Naive thymus-derived CD4-positive, alpha-beta T cell (primary cell): ENCODE measurements at regions of chr10 and their contacts with region 1.

Region 1: GRCh38 chr10:22682237-22683139 is 31.9 kb downstream of the PIP4K2A start:
- DNase-seq: peak in 8 of 9 donors; percentile 43 to 81 (median 75)
- ATAC-seq: peak; percentile 79
- H3K4me3 ChIP-seq: peak overlapping the region; percentile 36
- H3K4me3 Mint-ChIP-seq: peak overlapping the region; percentile 67 to 94 (median 80)
- H3K27ac ChIP-seq: peak overlapping the region; percentile 73
- H3K27ac Mint-ChIP-seq: peak overlapping the region; percentile 90 to 100 (median 95)
- H3K4me1 ChIP-seq: peaks cover 86 to 94% of the 10 kb centered on the region in 2 donors
- H3K4me1 Mint-ChIP-seq: peaks cover 64 to 99% (median 91%) of the 10 kb centered on the region in 7 donors
- H3K27me3 ChIP-seq: no peaks in the 10 kb centered on the region
- H3K27me3 Mint-ChIP-seq: no peaks in the 10 kb centered on the region

Region 2: DNA sequence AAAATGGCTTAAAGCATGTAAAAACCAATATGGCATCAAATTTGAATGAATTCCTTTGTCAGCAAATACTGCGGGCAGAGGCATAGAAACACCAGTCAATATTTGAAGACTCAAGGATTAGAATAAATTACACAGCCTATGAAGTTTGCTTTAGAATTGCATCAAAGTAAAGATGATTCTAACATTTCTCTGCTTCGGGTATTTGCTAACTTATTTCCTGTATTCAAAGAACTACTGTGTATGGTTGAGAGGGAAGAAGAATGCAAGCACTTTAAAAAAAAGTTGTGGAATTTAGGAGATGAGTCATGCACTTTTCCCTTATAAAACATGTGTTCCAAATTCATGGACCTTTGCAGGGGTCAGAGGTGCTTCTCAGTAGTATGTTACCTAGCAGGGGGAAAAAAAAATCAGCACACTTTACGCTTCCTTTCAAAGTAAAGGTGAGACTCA is 58.2 kb before region 1 on chr10:
- CTCF ChIA-PET with region 1: no interaction called
- POLR2A ChIA-PET with region 1: interaction called, 6 read pairs
- intact Hi-C with region 1: loop called in 1 of 2 experiments (anchors 1 kb)
- DNase-seq: peak in 4 of 9 donors; percentile 32 to 46 (median 32)
- ATAC-seq: peak; percentile 76
- H3K4me3 ChIP-seq: peak overlapping the region; percentile 22
- H3K4me3 Mint-ChIP-seq: peak overlapping the region in 9 of 10 donors; percentile 36 to 85 (median 63)
- H3K27ac ChIP-seq: no peak overlapping the region
- H3K27ac Mint-ChIP-seq: peak overlapping the region; percentile 20 to 90 (median 80)
- H3K4me1 ChIP-seq: peaks cover 82 to 100% of the 10 kb centered on the region in 2 donors
- H3K4me1 Mint-ChIP-seq: peaks cover 67 to 100% (median 97%) of the 10 kb centered on the region in 7 donors
- H3K27me3 ChIP-seq: no peaks in the 10 kb centered on the region
- H3K27me3 Mint-ChIP-seq: no peaks in the 10 kb centered on the region

Region 3: DNA sequence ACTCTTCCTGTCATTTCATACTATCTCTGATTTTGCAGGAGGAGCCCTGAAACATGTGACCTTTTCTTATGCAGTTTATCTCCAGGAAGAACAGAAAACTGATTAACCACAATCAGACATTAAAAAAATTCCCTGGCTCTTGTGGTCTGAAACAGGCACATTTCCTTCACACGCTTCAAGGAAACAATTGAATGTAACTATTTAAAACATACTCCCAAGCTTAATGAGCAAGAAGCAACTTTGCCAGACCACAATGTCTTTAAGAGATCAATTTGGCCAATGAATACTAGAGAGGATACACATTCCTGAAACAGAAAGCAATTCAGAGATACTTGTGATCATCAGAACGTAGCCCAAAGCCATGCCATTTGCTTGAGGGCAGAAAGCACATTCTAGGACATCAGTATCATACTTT is 33.9 kb before region 1 on chr10:
- CTCF ChIA-PET with region 1: interaction called, 4 read pairs
- POLR2A ChIA-PET with region 1: interaction called, 8 read pairs
- intact Hi-C with region 1: loop called in 1 of 2 experiments (anchors 1 kb)
- DNase-seq: no peak
- ATAC-seq: no peak
- H3K4me3 ChIP-seq: peak overlapping the region; percentile 37
- H3K4me3 Mint-ChIP-seq: peak overlapping the region in 9 of 10 donors; percentile 60 to 89 (median 82)
- H3K27ac ChIP-seq: peak overlapping the region; percentile 53
- H3K27ac Mint-ChIP-seq: peak overlapping the region; percentile 75 to 97 (median 93)
- H3K4me1 ChIP-seq: peaks cover 97 to 98% of the 10 kb centered on the region in 2 donors
- H3K4me1 Mint-ChIP-seq: peaks cover 79 to 96% (median 90%) of the 10 kb centered on the region in 7 donors
- H3K27me3 ChIP-seq: no peaks in the 10 kb centered on the region
- H3K27me3 Mint-ChIP-seq: no peaks in the 10 kb centered on the region

Region 4: DNA sequence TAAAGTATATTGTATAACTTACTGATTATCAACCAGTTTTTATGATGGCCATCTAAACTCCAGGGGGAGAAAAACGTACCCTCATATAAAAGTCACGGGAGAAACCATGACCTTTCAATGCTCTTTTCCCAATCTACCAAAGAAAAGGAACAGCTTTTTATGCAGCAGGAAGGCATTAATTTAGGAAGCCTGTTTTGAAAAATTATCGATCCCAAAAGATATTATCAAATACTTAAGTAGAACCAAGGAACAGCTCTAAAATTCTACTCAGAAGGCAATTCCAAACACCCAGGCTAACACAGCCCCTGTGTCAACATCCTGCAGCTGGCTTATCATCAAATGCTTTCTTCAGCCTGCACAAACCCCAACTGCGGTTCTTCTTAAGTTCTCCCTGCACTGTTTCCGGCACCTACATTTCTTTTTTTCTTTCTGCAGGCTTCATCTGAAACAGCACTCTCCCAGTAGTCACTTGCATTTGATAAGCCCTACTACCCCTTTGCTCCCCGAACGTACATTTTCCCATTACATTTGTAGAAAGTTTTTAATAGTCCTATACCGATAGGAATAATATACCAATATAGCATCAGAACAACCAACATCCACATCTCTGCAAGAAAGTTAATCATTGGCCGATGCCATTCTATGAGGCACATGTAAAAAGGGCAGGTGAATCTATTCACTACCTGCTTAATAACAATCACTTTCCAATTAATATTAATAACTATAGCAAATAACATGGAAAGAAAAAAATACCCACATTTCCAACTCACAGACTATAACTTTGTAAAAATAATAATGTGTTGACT is 16.0 kb before region 1 on chr10:
- CTCF ChIA-PET with region 1: interaction called, 6 read pairs
- POLR2A ChIA-PET with region 1: interaction called, 145 read pairs
- intact Hi-C with region 1: loop called (anchors 1 kb)
- DNase-seq: peak in 8 of 9 donors; percentile 49 to 91 (median 86)
- ATAC-seq: peak; percentile 96
- H3K4me3 ChIP-seq: peak overlapping the region; percentile 57
- H3K4me3 Mint-ChIP-seq: peak overlapping the region; percentile 78 to 97 (median 84)
- H3K27ac ChIP-seq: peak overlapping the region; percentile 59
- H3K27ac Mint-ChIP-seq: peak overlapping the region; percentile 74 to 97 (median 92)
- H3K4me1 ChIP-seq: peaks cover 68 to 75% of the 10 kb centered on the region in 2 donors
- H3K4me1 Mint-ChIP-seq: peaks cover 34 to 96% (median 89%) of the 10 kb centered on the region in 7 donors
- H3K27me3 ChIP-seq: no peaks in the 10 kb centered on the region
- H3K27me3 Mint-ChIP-seq: no peaks in the 10 kb centered on the region

Region 5: GRCh38 chr10:22704471-22704911 is 22.0 kb after region 1 on chr10:
- CTCF ChIA-PET with region 1: interaction called, 4 read pairs
- POLR2A ChIA-PET with region 1: interaction called, 10 read pairs
- intact Hi-C with region 1: loop called in 1 of 2 experiments (anchors 2 kb)
- DNase-seq: no peak
- ATAC-seq: peak; percentile 33
- H3K4me3 ChIP-seq: no peak overlapping the region
- H3K4me3 Mint-ChIP-seq: peak overlapping the region in 9 of 10 donors; percentile 14 to 70 (median 60)
- H3K27ac ChIP-seq: peak overlapping the region; percentile 30
- H3K27ac Mint-ChIP-seq: peak overlapping the region in 8 of 9 donors; percentile 29 to 92 (median 82)
- H3K4me1 ChIP-seq: peaks cover 59 to 93% of the 10 kb centered on the region in 2 donors
- H3K4me1 Mint-ChIP-seq: peaks cover 80 to 100% (median 99%) of the 10 kb centered on the region in 7 donors
- H3K27me3 ChIP-seq: no peaks in the 10 kb centered on the region
- H3K27me3 Mint-ChIP-seq: no peaks in the 10 kb centered on the region

Region 6: DNA sequence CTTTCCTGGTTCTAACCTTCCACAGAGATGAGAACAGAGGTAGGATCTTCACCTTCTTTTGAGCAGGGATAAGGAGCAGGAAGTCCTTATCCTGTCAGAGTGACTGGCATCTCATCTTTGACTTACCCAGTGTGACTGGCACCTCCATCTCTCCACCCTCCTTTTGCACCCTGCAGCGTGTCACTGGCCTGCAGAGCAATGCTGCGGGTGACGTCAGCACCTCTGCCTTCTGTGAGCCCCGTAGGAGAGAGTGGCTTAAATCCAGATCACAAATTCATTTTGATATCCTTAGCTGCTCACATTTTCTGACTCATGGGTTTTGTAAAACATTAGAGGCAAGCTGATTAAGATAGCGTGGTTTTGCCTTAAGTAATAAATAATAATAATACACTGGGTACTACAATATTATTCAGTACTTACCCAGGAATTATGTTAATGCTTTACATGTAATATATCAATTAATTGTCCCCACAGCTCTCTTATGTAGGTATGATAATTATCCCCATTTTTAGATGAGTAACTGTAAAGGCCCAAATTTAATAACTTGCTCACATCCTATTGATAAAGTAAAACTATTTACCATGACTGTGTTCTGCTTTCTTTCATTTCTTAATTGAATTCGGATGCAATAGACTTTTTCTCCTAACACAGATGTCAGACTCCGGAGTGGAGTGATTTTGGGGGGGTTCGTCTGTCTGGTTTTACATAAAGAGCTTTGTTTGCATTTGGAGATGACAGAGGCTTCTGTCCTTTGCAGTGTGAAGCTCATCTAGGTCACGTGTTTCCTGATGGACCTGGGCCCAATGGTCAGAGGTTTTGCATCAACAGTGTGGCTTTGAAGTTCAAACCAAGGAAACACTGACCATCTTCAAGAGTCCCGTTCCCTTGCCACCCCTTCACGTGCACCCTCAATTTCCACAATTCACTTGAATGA is 437.8 kb after region 1 on chr10:
- CTCF ChIA-PET with region 1: no interaction called
- POLR2A ChIA-PET with region 1: no interaction called
- intact Hi-C with region 1: no loop called
- DNase-seq: no peak
- ATAC-seq: no peak
- H3K4me3 ChIP-seq: no peak overlapping the region
- H3K4me3 Mint-ChIP-seq: no peak overlapping the region
- H3K27ac ChIP-seq: no peak overlapping the region
- H3K27ac Mint-ChIP-seq: no peak overlapping the region
- H3K4me1 ChIP-seq: no peaks in the 10 kb centered on the region
- H3K4me1 Mint-ChIP-seq: peaks cover 0 to 2% (median 0%) of the 10 kb centered on the region in 7 donors
- H3K27me3 ChIP-seq: no peaks in the 10 kb centered on the region
- H3K27me3 Mint-ChIP-seq: no peaks in the 10 kb centered on the region

Region 7: GRCh38 chr10:23291551-23292334 is 609.3 kb after region 1 on chr10:
- CTCF ChIA-PET with region 1: no interaction called
- POLR2A ChIA-PET with region 1: no interaction called
- intact Hi-C with region 1: no loop called
- DNase-seq: no peak
- ATAC-seq: no peak
- H3K4me3 ChIP-seq: no peak overlapping the region
- H3K4me3 Mint-ChIP-seq: no peak overlapping the region
- H3K27ac ChIP-seq: no peak overlapping the region
- H3K27ac Mint-ChIP-seq: no peak overlapping the region
- H3K4me1 ChIP-seq: no peaks in the 10 kb centered on the region
- H3K4me1 Mint-ChIP-seq: peaks cover 0 to 2% (median 0%) of the 10 kb centered on the region in 7 donors
- H3K27me3 ChIP-seq: peaks cover 0 to 6% of the 10 kb centered on the region in 2 donors
- H3K27me3 Mint-ChIP-seq: peaks cover 11 to 32% (median 20%) of the 10 kb centered on the region in 5 donors